ENCODE measurements at regions of chr3 and their contacts with region 1.

Region 1: GRCh38 chr3:168604767-168605166 is 509.0 kb upstream of the GOLIM4 start:
- DNase-seq: no peak
- CTCF ChIP-seq: no peak

Region 2: DNA sequence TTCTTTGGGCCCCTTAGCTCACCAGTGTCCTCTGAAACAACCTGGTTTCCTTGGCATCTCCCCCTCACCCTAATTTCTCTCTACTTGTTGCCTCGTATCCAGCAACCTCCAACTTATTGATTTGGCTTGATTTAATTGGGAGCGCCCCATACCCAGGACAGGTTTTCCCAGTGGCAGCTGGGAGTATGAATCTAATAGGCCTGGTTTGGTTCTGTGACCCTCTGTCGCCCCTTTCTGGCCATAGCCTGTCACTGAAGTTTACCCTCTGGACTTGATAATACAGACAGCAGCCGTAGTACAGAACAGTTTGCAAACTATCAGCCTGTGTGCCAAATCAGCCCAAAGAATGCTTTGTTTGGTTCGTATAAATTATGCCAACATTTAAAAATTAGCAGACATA is 16.1 kb after region 1 on chr3:
- CTCF ChIA-PET with region 1: interaction called, 12 read pairs
- POLR2A ChIA-PET with region 1: no interaction called
- DNase-seq: no peak
- CTCF ChIP-seq: peak; percentile 44

Measured in GM10248 (cell line).